ENCODE measurements at regions of chr13 and their contacts with region 1.

Region 1: GRCh38 chr13:65623148-65623547 is 1607.0 kb downstream of the PCDH9 start:
- DNase-seq: no peak
- H3K4me3 ChIP-seq: no peak overlapping the region
- H3K27ac ChIP-seq: no peak overlapping the region
- H3K4me1 ChIP-seq: no peaks in the 10 kb centered on the region
- H3K27me3 ChIP-seq: no peaks in the 10 kb centered on the region
- CTCF ChIP-seq: no peak
- POLR2A ChIP-seq: no peak

Region 2: GRCh38 chr13:64154514-64154913 is 1468.6 kb before region 1 on chr13:
- intact Hi-C with region 1: loop called (anchors 10 kb)
- DNase-seq: no peak
- H3K4me3 ChIP-seq: no peak overlapping the region
- H3K27ac ChIP-seq: no peak overlapping the region
- H3K4me1 ChIP-seq: no peaks in the 10 kb centered on the region
- H3K27me3 ChIP-seq: no peaks in the 10 kb centered on the region
- CTCF ChIP-seq: no peak
- POLR2A ChIP-seq: no peak

Region 3: GRCh38 chr13:65594298-65594781 is 28.8 kb before region 1 on chr13:
- intact Hi-C with region 1: no loop called
- DNase-seq: no peak
- H3K4me3 ChIP-seq: no peak overlapping the region
- H3K27ac ChIP-seq: no peak overlapping the region
- H3K4me1 ChIP-seq: no peaks in the 10 kb centered on the region
- H3K27me3 ChIP-seq: no peaks in the 10 kb centered on the region
- CTCF ChIP-seq: no peak
- POLR2A ChIP-seq: no peak

Region 4: GRCh38 chr13:65606622-65607021 is 16.5 kb before region 1 on chr13:
- intact Hi-C with region 1: no loop called
- DNase-seq: no peak
- H3K4me3 ChIP-seq: no peak overlapping the region
- H3K27ac ChIP-seq: no peak overlapping the region
- H3K4me1 ChIP-seq: no peaks in the 10 kb centered on the region
- H3K27me3 ChIP-seq: no peaks in the 10 kb centered on the region
- CTCF ChIP-seq: no peak
- POLR2A ChIP-seq: no peak

Region 5: GRCh38 chr13:65789815-65790214 is 166.7 kb after region 1 on chr13:
- intact Hi-C with region 1: no loop called
- DNase-seq: no peak
- H3K4me3 ChIP-seq: no peak overlapping the region
- H3K27ac ChIP-seq: no peak overlapping the region
- H3K4me1 ChIP-seq: no peaks in the 10 kb centered on the region
- H3K27me3 ChIP-seq: no peaks in the 10 kb centered on the region
- CTCF ChIP-seq: no peak
- POLR2A ChIP-seq: no peak

Region 6: GRCh38 chr13:66703597-66703996 is 1080.4 kb after region 1 on chr13:
- intact Hi-C with region 1: no loop called
- DNase-seq: no peak
- H3K4me3 ChIP-seq: no peak overlapping the region
- H3K27ac ChIP-seq: no peak overlapping the region
- H3K4me1 ChIP-seq: no peaks in the 10 kb centered on the region
- H3K27me3 ChIP-seq: no peaks in the 10 kb centered on the region
- CTCF ChIP-seq: no peak
- POLR2A ChIP-seq: no peak